SK-N-SH (cell line): ENCODE measurements at regions of chr7 and their contacts with region 1.

Region 1: GRCh38 chr7:30062591-30062990 is 34.4 kb downstream of the PLEKHA8 start:
- DNase-seq: peak; percentile 66
- H3K4me3 ChIP-seq: no peak overlapping the region
- H3K27ac ChIP-seq: no peak overlapping the region
- H3K4me1 ChIP-seq: no peaks in the 10 kb centered on the region
- H3K27me3 ChIP-seq: no peaks in the 10 kb centered on the region
- CTCF ChIP-seq: peak; percentile 96
- EP300 ChIP-seq: no peak
- RAD21 ChIP-seq: peak; percentile 86

Region 2: GRCh38 chr7:29370531-29371314 is 691.9 kb before region 1 on chr7:
- CTCF ChIA-PET with region 1: no interaction called
- POLR2A ChIA-PET with region 1: no interaction called
- DNase-seq: no peak
- H3K4me3 ChIP-seq: no peak overlapping the region
- H3K27ac ChIP-seq: no peak overlapping the region
- H3K4me1 ChIP-seq: peaks cover 0 to 3% of the 10 kb centered on the region in 2 experiments; a peak in 1 of 4 replicates
- H3K27me3 ChIP-seq: no peaks in the 10 kb centered on the region
- CTCF ChIP-seq: no peak
- EP300 ChIP-seq: no peak
- RAD21 ChIP-seq: no peak

Region 3: GRCh38 chr7:29636009-29636351 is 426.6 kb before region 1 on chr7:
- CTCF ChIA-PET with region 1: interaction called, 11 read pairs
- POLR2A ChIA-PET with region 1: no interaction called
- DNase-seq: no peak
- H3K4me3 ChIP-seq: no peak overlapping the region
- H3K27ac ChIP-seq: no peak overlapping the region
- H3K4me1 ChIP-seq: no peaks in the 10 kb centered on the region
- H3K27me3 ChIP-seq: no peaks in the 10 kb centered on the region
- CTCF ChIP-seq: peak; percentile 4; the same call in 1 of the 2 replicates
- EP300 ChIP-seq: no peak
- RAD21 ChIP-seq: no peak

Region 4: DNA sequence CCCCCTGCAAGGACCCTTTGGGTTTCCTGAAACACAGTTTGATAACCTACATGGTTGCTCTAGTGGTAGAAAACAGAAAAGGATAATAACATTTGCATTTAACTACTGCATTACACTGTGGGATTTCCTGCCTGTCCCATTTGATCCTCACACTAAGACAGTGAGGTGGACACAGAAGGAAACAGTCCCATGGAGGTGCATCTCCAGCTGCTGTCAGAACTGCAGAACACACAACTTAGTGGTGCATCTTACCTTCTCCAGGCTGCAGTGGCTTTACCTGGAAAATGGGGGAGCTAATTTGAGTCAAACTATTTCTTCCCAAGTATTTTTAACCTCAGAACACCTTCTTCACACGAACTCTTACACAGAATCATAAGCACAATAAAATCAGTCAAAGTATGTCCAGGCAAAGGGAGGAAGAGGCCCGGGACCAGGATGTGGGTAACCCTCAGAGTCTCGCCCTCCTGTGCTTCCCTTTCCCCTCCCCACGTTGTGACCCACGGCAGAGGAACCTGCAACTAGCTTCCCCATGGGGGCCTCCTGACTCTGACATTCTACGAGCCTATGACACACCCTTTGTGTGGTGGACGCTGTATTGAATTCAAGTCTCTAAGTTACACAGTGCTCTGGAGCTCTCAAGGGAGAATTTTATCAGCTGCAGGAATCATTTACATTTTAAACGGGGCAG is 106.6 kb before region 1 on chr7:
- CTCF ChIA-PET with region 1: interaction called, 25 read pairs
- POLR2A ChIA-PET with region 1: no interaction called
- DNase-seq: no peak
- H3K4me3 ChIP-seq: no peak overlapping the region
- H3K27ac ChIP-seq: no peak overlapping the region
- H3K4me1 ChIP-seq: peaks cover 0 to 13% of the 10 kb centered on the region in 2 experiments; a peak in 1 of 4 replicates
- H3K27me3 ChIP-seq: no peaks in the 10 kb centered on the region
- CTCF ChIP-seq: no peak
- EP300 ChIP-seq: no peak
- RAD21 ChIP-seq: no peak

Region 5: DNA sequence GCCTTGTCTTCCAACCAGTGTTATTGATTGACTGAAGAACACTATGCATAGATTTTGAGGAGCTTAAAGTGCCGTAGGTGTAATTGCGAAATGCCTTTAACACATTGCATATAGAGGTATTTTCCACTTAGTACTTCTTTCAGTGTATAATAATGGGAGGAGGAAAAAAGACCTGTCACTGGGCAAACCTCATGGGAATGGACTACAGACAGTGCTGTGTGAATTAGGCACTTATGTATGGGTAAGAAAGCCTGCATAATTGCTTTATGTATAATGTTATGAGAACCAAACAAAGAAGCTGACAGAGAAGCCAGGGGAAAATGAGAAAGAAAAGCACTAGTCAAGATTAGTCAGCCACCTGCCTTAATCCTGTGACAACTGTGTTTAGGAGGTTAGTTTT is 60.6 kb before region 1 on chr7:
- CTCF ChIA-PET with region 1: interaction called, 10 read pairs
- POLR2A ChIA-PET with region 1: no interaction called
- DNase-seq: no peak
- H3K4me3 ChIP-seq: no peak overlapping the region
- H3K27ac ChIP-seq: no peak overlapping the region
- H3K4me1 ChIP-seq: no peaks in the 10 kb centered on the region; a peak in 1 of 4 replicates
- H3K27me3 ChIP-seq: no peaks in the 10 kb centered on the region
- CTCF ChIP-seq: no peak
- EP300 ChIP-seq: no peak
- RAD21 ChIP-seq: no peak

Region 6: DNA sequence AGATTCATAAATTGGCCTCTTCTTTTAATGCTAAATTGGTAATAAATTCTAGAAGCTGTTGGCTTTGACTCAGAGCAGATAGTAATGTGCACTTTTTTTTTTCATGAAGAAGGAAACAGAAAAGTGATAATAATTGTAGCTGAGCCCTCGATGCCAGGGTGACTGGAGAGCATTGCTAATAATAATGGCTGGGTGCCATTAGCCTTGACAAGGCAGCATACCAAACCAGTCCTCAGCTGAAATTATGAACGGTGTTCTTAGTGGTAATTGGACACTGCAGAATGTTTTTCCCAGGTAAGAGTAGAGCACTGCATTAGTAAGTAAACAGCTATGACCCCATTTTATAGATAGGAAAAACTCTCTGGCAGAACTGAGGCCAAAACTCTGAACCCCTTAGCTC is 15.5 kb before region 1 on chr7:
- CTCF ChIA-PET with region 1: interaction called, 33 read pairs
- POLR2A ChIA-PET with region 1: no interaction called
- DNase-seq: no peak
- H3K4me3 ChIP-seq: no peak overlapping the region
- H3K27ac ChIP-seq: no peak overlapping the region
- H3K4me1 ChIP-seq: no peaks in the 10 kb centered on the region; a peak in 1 of 4 replicates
- H3K27me3 ChIP-seq: no peaks in the 10 kb centered on the region
- CTCF ChIP-seq: no peak
- EP300 ChIP-seq: no peak
- RAD21 ChIP-seq: no peak

Region 7: GRCh38 chr7:30134611-30135545 is 72.3 kb after region 1 on chr7 and contains the start of gene MTURN:
- CTCF ChIA-PET with region 1: interaction called, 14 read pairs
- POLR2A ChIA-PET with region 1: no interaction called
- DNase-seq: peak; percentile 100
- H3K4me3 ChIP-seq: peak within 1 kb of the TSS; percentile 72 to 86
- H3K27ac ChIP-seq: peak within 1 kb of the TSS; percentile 62 to 65
- H3K4me1 ChIP-seq: peaks cover 0 to 8% of the 10 kb centered on the region in 2 experiments; a peak in 1 of 4 replicates
- H3K27me3 ChIP-seq: no peaks in the 10 kb centered on the region
- CTCF ChIP-seq: no peak
- EP300 ChIP-seq: no peak; a peak in 1 of 4 replicates
- RAD21 ChIP-seq: no peak
- polyA plus RNA-seq, gene MTURN: 9.0 and 12.9 TPM in 2 replicates